Heart right ventricle (tissue), 16 donors: ENCODE measurements at regions of chr12 and their contacts with region 1.

Region 1: DNA sequence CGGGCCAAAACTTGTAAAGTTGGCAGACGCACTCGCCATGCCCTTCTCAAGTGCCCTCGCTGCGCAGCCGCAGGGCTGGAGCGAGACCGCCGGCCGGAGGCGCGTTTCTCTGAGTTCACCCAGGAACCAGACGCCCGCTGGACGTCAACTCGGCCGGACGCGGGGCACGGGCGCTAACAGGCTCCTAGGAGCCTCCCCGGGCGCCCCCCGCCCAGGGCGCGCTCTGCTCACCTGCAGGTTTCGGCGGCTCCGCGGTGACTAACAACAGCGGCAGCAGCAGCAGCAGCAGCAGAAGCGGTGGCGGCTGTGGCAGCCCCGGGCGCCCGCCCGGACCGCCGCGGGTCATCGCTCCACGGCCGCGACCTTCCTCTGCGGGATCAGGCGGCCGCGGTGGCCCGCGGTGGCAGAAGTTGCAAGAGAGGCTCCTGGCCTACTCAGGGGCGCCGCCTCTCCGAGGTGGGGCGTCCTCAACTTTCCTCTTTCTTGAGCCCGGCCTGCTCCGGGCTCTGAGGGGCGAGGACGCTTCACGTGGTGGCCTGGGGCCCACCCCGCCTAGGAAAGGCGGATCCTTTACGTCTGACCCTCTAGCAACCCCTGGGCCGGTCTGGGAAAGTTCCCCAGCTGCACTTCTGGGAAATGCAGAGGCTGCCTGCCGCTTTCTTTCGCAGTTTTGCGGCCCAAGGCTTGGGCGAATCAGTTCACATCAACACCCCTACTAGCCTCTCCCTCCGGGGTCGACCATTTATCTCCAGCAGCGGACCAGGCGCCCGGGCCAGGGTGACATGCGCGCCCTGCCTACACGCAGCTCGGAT is at the start of gene PLBD1:
- DNase-seq: peak; percentile 74 to 81
- ATAC-seq: peak; percentile 88 to 96 (median 91)
- H3K4me3 ChIP-seq: peak within 1 kb of the TSS; percentile 45 to 83 (median 62)
- H3K27ac ChIP-seq: peak within 1 kb of the TSS; percentile 28 to 98 (median 94)
- H3K4me1 ChIP-seq: peaks cover 0 to 29% (median 8%) of the 10 kb centered on the region in 9 donors
- H3K27me3 ChIP-seq: no peaks in the 10 kb centered on the region
- CTCF ChIP-seq: no peak
- total RNA-seq, gene PLBD1: 19.4 to 45.1 (median 30.1) TPM

Region 2: GRCh38 chr12:14303661-14304155 is 263.8 kb before region 1 on chr12:
- intact Hi-C with region 1: no loop called
- DNase-seq: no peak
- ATAC-seq: no peak
- H3K4me3 ChIP-seq: no peak overlapping the region
- H3K27ac ChIP-seq: no peak overlapping the region
- H3K4me1 ChIP-seq: peaks cover 0 to 3% (median 0%) of the 10 kb centered on the region in 9 donors
- H3K27me3 ChIP-seq: no peaks in the 10 kb centered on the region
- CTCF ChIP-seq: no peak

Region 3: DNA sequence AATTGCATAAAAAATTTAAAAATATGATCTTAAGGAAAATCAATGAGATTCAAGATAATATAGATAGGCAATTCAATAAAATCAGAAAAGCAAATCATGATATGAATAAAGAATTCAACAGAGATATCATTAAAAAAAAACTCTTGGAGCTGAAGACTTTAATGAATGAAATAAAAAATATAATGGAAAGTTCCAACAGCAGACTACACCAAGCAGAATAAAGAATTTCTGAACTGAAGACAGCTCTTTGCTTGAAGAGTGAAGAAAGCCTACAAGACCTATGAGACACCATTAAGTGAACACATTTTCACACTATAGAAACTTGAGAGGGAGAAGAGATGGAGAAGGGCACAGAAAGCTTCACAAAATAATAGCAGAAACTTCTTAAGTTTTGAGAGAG is 45.7 kb before region 1 on chr12:
- intact Hi-C with region 1: no loop called
- DNase-seq: no peak
- ATAC-seq: no peak
- H3K4me3 ChIP-seq: no peak overlapping the region
- H3K27ac ChIP-seq: no peak overlapping the region
- H3K4me1 ChIP-seq: no peaks in the 10 kb centered on the region
- H3K27me3 ChIP-seq: no peaks in the 10 kb centered on the region
- CTCF ChIP-seq: no peak

Region 4: GRCh38 chr12:14554281-14555007 is 13.1 kb before region 1 on chr12:
- intact Hi-C with region 1: loop called in 1 of 10 experiments (anchors 1 kb)
- DNase-seq: peak; percentile 81 to 90
- ATAC-seq: peak; percentile 90 to 98 (median 96)
- H3K4me3 ChIP-seq: peak overlapping the region in 8 of 10 donors; percentile 2 to 37 (median 20)
- H3K27ac ChIP-seq: peak overlapping the region; percentile 66 to 90 (median 84)
- H3K4me1 ChIP-seq: peaks cover 0 to 44% (median 20%) of the 10 kb centered on the region in 9 donors
- H3K27me3 ChIP-seq: no peaks in the 10 kb centered on the region
- CTCF ChIP-seq: peak in 6 of 9 donors; percentile 14 to 57 (median 40)

Region 5: DNA sequence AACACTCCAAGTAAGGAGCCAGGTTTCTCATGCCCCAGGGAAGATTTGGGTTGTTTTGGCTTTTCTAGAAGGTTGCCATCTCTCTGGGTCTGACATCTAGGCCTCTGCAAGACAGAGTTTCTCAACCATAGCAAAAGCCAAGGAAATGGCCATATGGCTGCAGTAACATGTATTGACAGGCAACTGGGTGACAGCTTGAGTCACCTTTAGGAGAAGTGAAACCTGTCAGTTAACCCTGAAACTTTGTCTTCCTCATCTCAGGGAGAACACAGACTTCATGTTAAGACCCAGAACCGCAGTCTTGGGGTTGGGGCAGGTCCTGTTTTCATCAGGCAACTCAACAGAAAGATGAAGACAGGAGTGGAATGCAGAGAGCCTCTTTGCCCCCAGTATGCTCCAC is 46.2 kb after region 1 on chr12:
- intact Hi-C with region 1: loop called in 1 of 10 experiments (anchors 5 kb)
- DNase-seq: no peak
- ATAC-seq: peak in 3 of 8 donors; percentile 12 to 22 (median 15)
- H3K4me3 ChIP-seq: no peak overlapping the region
- H3K27ac ChIP-seq: peak overlapping the region in 9 of 10 donors; percentile 17 to 77 (median 63)
- H3K4me1 ChIP-seq: peaks cover 0 to 36% (median 18%) of the 10 kb centered on the region in 9 donors
- H3K27me3 ChIP-seq: no peaks in the 10 kb centered on the region
- CTCF ChIP-seq: no peak